Right ventricle myocardium inferior (tissue), 1 donor: ENCODE measurements at regions of chr2 and their contacts with region 1.

Region 1: DNA sequence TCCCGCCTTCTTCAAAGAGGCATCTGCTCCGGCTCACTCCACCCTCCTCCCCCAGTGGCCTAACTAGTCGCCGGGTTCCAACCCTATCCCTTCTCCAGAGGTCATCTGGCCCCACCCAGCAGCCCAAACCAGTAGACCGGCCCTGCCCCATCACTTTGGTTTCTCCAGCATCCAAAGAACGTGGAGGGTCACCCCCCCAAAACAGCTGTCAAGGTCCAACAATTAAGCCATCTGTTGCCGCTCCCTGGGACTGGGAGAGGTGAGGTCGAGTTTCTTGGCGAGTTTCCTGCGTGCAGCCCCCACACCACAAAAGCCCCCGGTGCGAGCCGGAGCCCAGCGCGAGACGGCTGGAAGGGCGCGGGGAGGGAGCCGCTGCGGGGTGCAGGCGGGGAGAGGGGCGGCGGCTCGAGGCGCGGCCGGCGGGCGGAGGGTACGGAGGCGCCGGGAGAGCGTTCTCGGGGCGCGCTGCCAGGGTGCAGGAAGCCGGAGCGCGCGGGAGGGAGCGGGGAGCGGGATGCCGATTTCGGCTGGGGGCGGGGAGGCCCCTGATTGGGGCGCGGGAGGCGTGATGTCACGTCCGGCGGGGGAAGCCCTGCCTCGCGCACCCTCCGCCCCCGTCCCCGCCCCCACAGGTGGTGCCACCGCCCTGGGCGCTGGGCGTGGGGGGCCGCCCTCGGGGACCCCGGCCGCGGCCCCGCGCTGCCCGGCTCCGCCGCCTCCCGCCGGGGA is 571 bp upstream of the GPC1 start:
- DNase-seq: peak; percentile 94
- ATAC-seq: peak; percentile 83

Region 2: GRCh38 chr2:240149943-240150784 is 284.7 kb before region 1 on chr2:
- intact Hi-C with region 1: loop called (anchors 2 kb)
- DNase-seq: no peak
- ATAC-seq: no peak

Region 3: GRCh38 chr2:240240017-240240734 is 194.7 kb before region 1 on chr2:
- intact Hi-C with region 1: no loop called
- DNase-seq: no peak
- ATAC-seq: no peak

Region 4: GRCh38 chr2:240250985-240251847 is 183.7 kb before region 1 on chr2:
- intact Hi-C with region 1: loop called (anchors 5 kb)
- DNase-seq: peak; percentile 94
- ATAC-seq: peak; percentile 91

Region 5: GRCh38 chr2:240298803-240299709 is 135.8 kb before region 1 on chr2:
- intact Hi-C with region 1: loop called (anchors 1 kb)
- DNase-seq: no peak
- ATAC-seq: no peak

Region 6: DNA sequence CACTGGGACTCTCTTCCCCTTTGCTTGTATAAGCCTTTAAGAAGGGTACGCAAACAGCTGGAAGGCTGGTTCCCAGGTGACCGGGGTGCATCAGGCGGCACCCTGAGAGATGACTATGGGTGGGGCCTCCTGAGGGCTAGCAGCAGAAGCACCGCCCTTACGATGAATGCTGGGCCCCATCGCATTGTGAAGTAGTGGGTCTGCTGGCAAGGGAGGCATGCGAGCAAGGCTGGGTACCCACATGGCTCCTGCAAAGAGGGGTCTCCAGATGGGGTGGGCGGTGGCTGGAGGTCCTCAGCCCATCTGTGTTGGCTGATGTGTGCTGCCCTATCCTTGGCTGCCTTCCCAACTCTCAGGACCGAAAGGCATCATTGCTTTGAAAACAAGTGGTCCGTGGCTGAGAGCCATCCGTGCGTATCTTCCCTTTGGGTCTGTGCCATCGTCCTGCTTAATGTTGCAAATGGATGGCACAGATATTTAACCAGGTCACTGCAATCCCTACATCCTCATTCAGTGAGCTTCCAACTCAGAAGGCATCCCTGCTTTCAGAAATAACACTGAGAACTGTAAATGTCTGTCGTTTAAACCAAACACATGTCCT is 83.0 kb before region 1 on chr2:
- intact Hi-C with region 1: loop called (anchors 5 kb)
- DNase-seq: no peak
- ATAC-seq: no peak

Region 7: DNA sequence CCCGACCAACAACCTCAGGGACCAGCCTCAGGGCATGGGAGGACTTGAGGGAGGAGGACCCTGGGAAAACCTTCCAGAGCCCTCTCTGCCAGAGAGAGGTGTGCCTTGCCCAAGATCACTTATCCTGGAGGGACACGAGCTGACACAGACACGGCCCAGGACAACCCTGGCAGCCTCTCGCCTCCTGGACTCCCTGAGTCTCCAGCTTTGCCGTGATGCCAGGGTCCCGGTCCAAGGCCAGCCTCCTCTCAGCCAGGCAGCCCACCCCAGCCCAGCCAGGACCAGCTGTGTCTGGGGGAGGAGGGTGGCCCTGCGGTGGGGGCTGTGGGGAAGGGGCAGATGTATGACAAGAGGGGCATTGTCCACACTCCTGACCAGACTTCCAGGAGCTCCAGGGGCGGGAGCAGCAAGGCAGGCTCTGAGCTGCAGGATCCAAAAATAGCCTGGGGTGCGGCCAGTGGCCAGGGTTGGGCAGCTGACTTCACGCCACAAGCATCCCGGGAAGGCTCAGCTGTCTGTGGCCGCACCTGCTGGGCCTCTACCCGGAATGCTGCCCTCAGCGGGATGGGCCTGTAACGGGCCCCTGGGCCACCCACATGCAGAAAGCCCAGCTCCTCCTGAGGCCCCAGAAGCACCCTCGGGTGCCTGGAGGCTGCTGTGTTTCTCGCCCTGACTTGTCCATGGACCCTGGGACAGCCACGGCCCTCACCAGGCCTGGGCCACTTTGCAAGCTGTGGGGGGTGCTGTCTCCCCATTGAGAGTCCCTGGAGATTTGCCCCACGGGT is 64.9 kb before region 1 on chr2:
- intact Hi-C with region 1: loop called (anchors 1 kb)
- DNase-seq: peak; percentile 78
- ATAC-seq: peak; percentile 73